ENCODE measurements at regions of chr11 and their contacts with region 1.

Region 1: GRCh38 chr11:44621140-44621681 is 55.7 kb downstream of the CD82 start:
- DNase-seq: peak; percentile 60 to 90 (median 80)
- H3K4me3 ChIP-seq: no peak overlapping the region
- H3K27ac ChIP-seq: no peak overlapping the region
- H3K4me1 ChIP-seq: no peaks in the 10 kb centered on the region
- H3K27me3 ChIP-seq: no peaks in the 10 kb centered on the region
- CTCF ChIP-seq: peak; percentile 97 to 99 (median 98)
- POLR2A ChIP-seq: peak in 1 of 2 donors; percentile 12

Region 2: GRCh38 chr11:44556735-44557409 is 64.3 kb before region 1 on chr11:
- intact Hi-C with region 1: loop called (anchors 2 kb)
- DNase-seq: peak; percentile 63 to 87 (median 76)
- H3K4me3 ChIP-seq: no peak overlapping the region
- H3K27ac ChIP-seq: peak overlapping the region in 3 of 5 donors; percentile 9 to 53 (median 33)
- H3K4me1 ChIP-seq: peaks cover 0 to 12% of the 10 kb centered on the region in 2 donors
- H3K27me3 ChIP-seq: no peaks in the 10 kb centered on the region
- CTCF ChIP-seq: peak; percentile 51 to 97 (median 87)
- POLR2A ChIP-seq: no peak

Region 3: DNA sequence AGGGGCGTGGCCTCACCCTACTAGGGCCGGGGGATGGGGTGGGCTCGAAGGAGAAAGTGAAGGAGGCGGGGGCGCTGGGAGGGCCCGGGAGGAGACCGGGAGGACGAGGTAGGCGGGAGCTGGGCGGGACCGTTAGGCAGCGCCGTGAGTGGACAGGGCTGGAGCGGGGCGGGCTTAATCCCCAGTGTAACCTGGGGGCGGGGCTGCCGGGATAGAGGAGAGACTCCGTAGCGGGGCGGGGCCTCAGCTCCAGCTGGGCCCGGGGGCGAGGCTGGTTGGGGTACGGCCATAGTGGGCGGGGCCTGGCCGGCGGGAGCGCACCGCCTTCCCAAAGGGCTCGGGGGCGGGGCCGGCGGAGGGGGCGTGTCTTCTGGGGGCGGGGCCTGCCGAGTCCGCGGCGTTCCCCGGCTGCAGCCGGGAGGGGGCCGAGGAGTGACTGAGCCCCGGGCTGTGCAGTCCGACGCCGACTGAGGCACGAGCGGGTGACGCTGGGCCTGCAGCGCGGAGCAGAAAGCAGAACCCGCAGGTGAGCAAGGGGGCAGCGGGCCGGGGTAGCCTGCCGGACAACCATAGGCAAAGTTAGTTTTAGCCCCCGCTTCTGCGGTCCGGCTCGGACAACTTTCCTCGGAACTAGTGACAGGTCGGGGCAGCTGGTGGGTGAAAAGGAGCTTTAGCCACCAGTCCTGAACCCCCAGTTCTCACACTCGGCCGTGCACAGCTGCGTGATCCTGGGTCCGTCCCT is 55.8 kb before region 1 on chr11 and contains the start of gene CD82:
- intact Hi-C with region 1: loop called in 1 of 2 experiments (anchors 2 kb)
- DNase-seq: peak; percentile 100
- H3K4me3 ChIP-seq: peak within 1 kb of the TSS in 3 of 4 donors; percentile 50 to 59 (median 54)
- H3K27ac ChIP-seq: peak within 1 kb of the TSS; percentile 94 to 99 (median 98)
- H3K4me1 ChIP-seq: peaks cover 26 to 39% of the 10 kb centered on the region in 2 donors
- H3K27me3 ChIP-seq: no peaks in the 10 kb centered on the region
- CTCF ChIP-seq: peak in 4 of 6 experiments; percentile 15 to 44 (median 22)
- POLR2A ChIP-seq: peak; percentile 63 to 89
- total RNA-seq, gene CD82: 2.3 to 38.2 (median 20.0) TPM

Region 4: DNA sequence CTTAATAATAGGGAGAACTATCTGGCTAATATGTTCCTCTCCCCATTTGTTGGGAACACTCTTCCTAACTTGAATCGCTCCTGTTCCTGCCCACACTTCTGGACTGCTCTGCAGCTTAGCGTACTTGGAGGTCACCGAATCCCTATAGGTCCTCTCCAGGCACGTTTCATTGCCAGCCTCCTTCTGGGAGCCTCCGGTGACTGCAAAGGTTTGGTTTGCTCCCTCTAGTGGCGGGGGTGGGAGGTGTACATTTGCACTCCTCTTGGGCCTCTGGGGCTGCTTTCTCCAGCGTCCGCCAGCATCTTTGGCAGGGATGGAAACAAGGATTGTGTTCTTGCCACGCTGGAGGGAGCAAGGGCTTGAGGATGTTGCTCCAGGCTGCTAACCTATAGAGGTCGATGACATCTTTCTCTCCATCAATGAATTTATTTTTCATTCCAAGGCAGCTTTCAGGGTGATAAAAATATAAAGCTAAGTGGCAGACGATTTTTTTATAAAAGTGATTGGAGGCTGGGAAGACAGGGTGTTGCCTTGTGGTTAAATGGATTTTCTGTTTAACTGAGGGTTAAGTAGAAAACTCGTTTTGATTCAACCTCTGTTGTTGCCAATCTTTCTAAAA is 154.3 kb after region 1 on chr11:
- intact Hi-C with region 1: loop called in 1 of 2 experiments (anchors 10 kb)
- DNase-seq: peak; percentile 52 to 83 (median 72)
- H3K4me3 ChIP-seq: no peak overlapping the region
- H3K27ac ChIP-seq: peak overlapping the region in 3 of 5 donors; percentile 13 to 50 (median 21)
- H3K4me1 ChIP-seq: peaks cover 0 to 54% of the 10 kb centered on the region in 2 donors
- H3K27me3 ChIP-seq: no peaks in the 10 kb centered on the region
- CTCF ChIP-seq: peak; percentile 42 to 78 (median 66)
- POLR2A ChIP-seq: no peak

Region 5: GRCh38 chr11:44911029-44911814 is 290.0 kb after region 1 on chr11:
- intact Hi-C with region 1: loop called (anchors 2 kb)
- DNase-seq: peak; percentile 84 to 96 (median 92)
- H3K4me3 ChIP-seq: no peak overlapping the region
- H3K27ac ChIP-seq: peak overlapping the region in 1 of 5 donors; percentile 5
- H3K4me1 ChIP-seq: peaks cover 0 to 21% of the 10 kb centered on the region in 2 donors
- H3K27me3 ChIP-seq: no peaks in the 10 kb centered on the region
- CTCF ChIP-seq: peak; percentile 78 to 94 (median 86)
- POLR2A ChIP-seq: no peak